Gastrocnemius medialis (tissue), 4 donors: ENCODE measurements at regions of chr6 and their contacts with region 1.

Region 1: GRCh38 chr6:158666628-158667359 is 16.9 kb downstream of the SYTL3 start:
- DNase-seq: peak in 1 of 2 donors; percentile 71
- ATAC-seq: peak; percentile 89 to 91
- H3K4me3 ChIP-seq: peak overlapping the region in 2 of 4 donors; percentile 15 to 23
- H3K27ac ChIP-seq: peak overlapping the region; percentile 81 to 90 (median 85)
- H3K4me1 ChIP-seq: peaks cover 40 to 56% of the 10 kb centered on the region in 2 donors
- H3K27me3 ChIP-seq: no peaks in the 10 kb centered on the region
- CTCF ChIP-seq: no peak
- POLR2A ChIP-seq: peak in 1 of 2 donors; percentile 20

Region 2: GRCh38 chr6:158654960-158655489 is 11.8 kb before region 1 on chr6:
- in situ Hi-C with region 1: no loop called
- intact Hi-C with region 1: loop called (anchors 1 kb)
- DNase-seq: peak; percentile 64 to 81
- ATAC-seq: peak; percentile 86 to 87
- H3K4me3 ChIP-seq: peak overlapping the region in 1 of 4 donors; percentile 13
- H3K27ac ChIP-seq: peak overlapping the region; percentile 87 to 96 (median 91)
- H3K4me1 ChIP-seq: peaks cover 16 to 20% of the 10 kb centered on the region in 2 donors
- H3K27me3 ChIP-seq: no peaks in the 10 kb centered on the region
- CTCF ChIP-seq: no peak
- POLR2A ChIP-seq: no peak

Region 3: GRCh38 chr6:158686791-158687381 is 20.1 kb after region 1 on chr6:
- in situ Hi-C with region 1: no loop called
- intact Hi-C with region 1: no loop called
- DNase-seq: no peak
- ATAC-seq: no peak
- H3K4me3 ChIP-seq: no peak overlapping the region
- H3K27ac ChIP-seq: no peak overlapping the region
- H3K4me1 ChIP-seq: peaks cover 9 to 12% of the 10 kb centered on the region in 2 donors
- H3K27me3 ChIP-seq: no peaks in the 10 kb centered on the region
- CTCF ChIP-seq: no peak
- POLR2A ChIP-seq: no peak